ENCODE measurements at regions of chr17 and their contacts with region 1.

Region 1: DNA sequence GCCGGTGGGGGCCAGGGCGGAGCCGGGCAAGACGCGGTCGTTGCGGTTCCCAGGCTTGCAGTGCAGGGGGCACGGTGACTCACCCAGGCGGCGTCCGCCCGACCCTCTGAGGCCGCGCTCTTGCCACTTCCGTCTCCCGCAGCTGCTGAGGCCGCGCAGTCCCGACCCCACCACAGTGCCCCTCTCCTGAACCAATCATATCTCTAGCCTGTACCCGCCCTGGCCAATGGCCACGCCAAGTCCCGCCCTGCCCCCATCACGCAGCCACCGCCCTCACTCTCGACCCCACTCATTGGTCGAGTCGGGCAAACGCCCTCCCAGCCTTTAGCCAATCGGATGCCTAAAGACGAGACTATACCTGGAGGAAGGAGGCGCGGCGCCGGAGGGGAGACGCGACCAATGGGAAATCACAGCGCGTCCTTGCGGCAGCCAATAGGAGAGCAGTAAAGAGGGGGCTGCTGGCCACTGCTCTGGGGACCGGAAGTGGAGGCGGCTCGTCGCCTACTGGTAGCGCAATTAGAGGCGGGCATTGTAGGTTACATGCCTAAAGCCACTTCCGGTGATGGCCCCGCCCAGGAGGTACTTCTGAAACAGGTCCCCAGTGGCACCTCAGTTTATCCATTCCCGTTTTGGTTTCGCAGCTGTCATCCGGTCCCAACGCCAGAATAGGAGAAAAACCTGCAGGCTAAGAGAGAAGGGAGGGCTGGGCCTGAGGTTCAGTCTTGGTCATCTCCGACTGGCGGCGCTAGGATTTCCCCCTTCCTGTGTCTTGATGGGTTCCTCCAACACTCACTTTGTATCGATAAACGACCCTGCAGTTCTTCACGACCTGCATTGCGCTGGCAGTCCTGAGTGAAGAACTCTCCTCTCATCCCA is 3.5 kb upstream of the MTMR4 start:
- DNase-seq: peak; percentile 99
- H3K4me3 ChIP-seq: peak overlapping the region; percentile 70
- H3K27me3 ChIP-seq: no peaks in the 10 kb centered on the region
- CTCF ChIP-seq: no peak

Region 2: DNA sequence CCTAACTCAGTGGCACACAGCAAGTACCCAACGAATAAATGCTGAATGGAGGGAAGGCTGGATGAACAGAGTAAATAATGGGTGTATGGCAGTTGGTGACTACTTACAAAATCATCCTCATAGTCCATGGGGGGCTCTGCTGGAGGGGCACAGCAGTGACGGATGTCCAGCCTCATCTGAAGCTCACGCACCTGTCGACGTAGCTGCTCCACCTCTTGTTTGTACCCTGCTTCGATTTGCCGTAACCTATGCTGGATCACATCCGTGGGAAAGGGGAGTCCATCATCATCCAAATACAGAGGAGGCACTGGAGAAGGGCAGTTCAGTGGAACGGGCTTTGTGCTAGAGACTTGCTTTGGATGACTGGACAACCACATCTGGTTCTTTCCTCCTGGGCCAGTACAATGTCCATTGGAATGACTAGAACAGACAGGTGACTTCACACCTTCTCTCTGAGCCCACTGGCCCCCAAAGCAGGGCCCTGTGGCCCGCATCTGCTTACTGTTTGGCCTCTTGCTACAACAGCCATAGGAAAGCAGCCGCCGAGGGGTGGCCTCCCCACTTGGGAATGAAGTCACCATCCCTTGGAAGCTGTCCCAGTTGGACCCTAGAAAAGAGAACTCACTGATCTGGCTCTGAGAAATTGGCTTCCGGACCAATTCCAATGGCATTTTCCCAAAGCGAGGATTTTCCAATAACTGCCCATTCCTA is 23.0 kb before region 1 on chr17:
- CTCF ChIA-PET with region 1: no interaction called
- POLR2A ChIA-PET with region 1: no interaction called
- DNase-seq: no peak
- H3K4me3 ChIP-seq: no peak overlapping the region
- H3K27me3 ChIP-seq: no peaks in the 10 kb centered on the region
- CTCF ChIP-seq: no peak

Region 3: GRCh38 chr17:58536542-58536941 is 18.6 kb after region 1 on chr17:
- CTCF ChIA-PET with region 1: interaction called, 11 read pairs
- POLR2A ChIA-PET with region 1: no interaction called
- DNase-seq: no peak
- H3K4me3 ChIP-seq: no peak overlapping the region
- H3K27me3 ChIP-seq: peaks cover 8% of the 10 kb centered on the region; the same call in 1 of the 2 replicates
- CTCF ChIP-seq: no peak

Region 4: GRCh38 chr17:58631523-58632323 is 113.8 kb after region 1 on chr17:
- CTCF ChIA-PET with region 1: interaction called, 18 read pairs
- POLR2A ChIA-PET with region 1: interaction called, 8 read pairs
- DNase-seq: peak; percentile 83
- H3K4me3 ChIP-seq: peak overlapping the region; percentile 29
- H3K27me3 ChIP-seq: no peaks in the 10 kb centered on the region
- CTCF ChIP-seq: peak; percentile 19; the same call in 1 of the 2 replicates

Region 5: DNA sequence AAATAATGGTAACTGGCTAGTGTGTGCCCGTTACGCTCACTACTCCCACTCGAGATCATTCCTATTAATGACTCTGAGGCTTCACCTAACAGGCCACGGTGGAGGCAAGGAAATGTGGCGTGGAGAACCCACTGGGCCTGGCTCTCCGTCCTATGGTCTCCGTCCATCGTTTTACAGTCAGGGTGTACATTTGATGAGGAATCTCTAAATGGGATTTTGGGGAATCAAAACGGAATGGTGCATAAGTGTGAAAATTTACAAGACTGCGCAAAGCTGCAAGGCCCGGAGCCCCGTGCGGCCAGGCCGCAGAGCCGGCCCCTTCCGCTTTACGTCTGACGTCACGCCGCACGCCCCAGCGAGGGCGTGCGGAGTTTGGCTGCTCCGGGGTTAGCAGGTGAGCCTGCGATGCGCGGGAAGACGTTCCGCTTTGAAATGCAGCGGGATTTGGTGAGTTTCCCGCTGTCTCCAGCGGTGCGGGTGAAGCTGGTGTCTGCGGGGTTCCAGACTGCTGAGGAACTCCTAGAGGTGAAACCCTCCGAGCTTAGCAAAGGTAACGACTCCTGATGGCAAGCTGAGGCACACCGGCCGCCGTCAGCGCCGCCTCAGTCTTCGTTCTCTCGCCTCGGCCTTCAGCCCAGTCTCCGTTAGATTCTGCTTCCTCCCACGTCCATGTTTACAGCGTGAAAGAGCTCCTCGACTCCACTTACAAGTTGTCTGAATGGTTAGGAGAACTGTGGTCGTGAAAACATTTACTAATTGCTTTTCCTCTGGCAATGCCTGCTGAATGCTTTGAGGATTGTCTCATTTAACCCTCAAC is 174.5 kb after region 1 on chr17 and contains the start of gene RAD51C:
- CTCF ChIA-PET with region 1: interaction called, 16 read pairs
- POLR2A ChIA-PET with region 1: no interaction called
- DNase-seq: no peak
- H3K4me3 ChIP-seq: peak within 1 kb of the TSS; percentile 60
- H3K27me3 ChIP-seq: no peaks in the 10 kb centered on the region
- CTCF ChIP-seq: 0 out of 2 replicates have a peak, but pooled peaks have one; percentile 7
- polyA plus RNA-seq, gene RAD51C: 15.0 and 30.6 TPM in 2 replicates